ENCODE measurements at regions of chr11 and their contacts with region 1.

Region 1: DNA sequence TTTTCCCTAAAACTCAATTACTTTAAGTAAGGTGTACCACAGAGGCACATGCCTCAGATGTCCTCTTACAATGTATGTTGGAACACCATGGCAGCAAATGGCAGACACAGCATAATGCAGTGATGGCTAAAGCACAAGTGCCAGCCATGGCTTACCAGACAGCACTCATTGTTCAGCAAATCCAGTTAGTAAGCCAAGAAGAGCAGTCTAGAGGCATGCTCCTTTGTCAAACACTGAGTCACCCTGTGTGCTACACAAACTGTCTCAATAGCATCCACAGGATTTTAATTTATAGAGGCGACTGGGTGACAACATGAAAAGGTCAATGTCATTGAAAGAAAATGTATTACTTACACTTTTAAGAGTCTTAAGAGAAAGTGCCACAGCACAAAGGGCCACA is 140.6 kb downstream of the KCNA4 start:
- DNase-seq: no peak
- ATAC-seq: no peak
- H3K4me3 ChIP-seq: no peak overlapping the region
- H3K27ac ChIP-seq: no peak overlapping the region
- H3K4me1 ChIP-seq: no peaks in the 10 kb centered on the region
- H3K27me3 ChIP-seq: no peaks in the 10 kb centered on the region
- CTCF ChIP-seq: no peak

Region 2: GRCh38 chr11:29900382-29900781 is 24.2 kb after region 1 on chr11:
- intact Hi-C with region 1: loop called in 1 of 10 experiments (anchors 2 kb)
- DNase-seq: no peak
- ATAC-seq: no peak
- H3K4me3 ChIP-seq: no peak overlapping the region
- H3K27ac ChIP-seq: no peak overlapping the region
- H3K4me1 ChIP-seq: no peaks in the 10 kb centered on the region
- H3K27me3 ChIP-seq: no peaks in the 10 kb centered on the region
- CTCF ChIP-seq: no peak

Region 3: GRCh38 chr11:30561691-30562415 is 685.7 kb after region 1 on chr11:
- intact Hi-C with region 1: no loop called
- DNase-seq: no peak
- ATAC-seq: peak in 1 of 8 donors; percentile 12
- H3K4me3 ChIP-seq: no peak overlapping the region
- H3K27ac ChIP-seq: no peak overlapping the region
- H3K4me1 ChIP-seq: peaks cover 0 to 32% (median 11%) of the 10 kb centered on the region in 9 donors
- H3K27me3 ChIP-seq: no peaks in the 10 kb centered on the region
- CTCF ChIP-seq: no peak

Measured in heart right ventricle (tissue), 16 donors.